Stomach (tissue), 19 donors: ENCODE measurements at regions of chr15 and their contacts with region 1.

Region 1: DNA sequence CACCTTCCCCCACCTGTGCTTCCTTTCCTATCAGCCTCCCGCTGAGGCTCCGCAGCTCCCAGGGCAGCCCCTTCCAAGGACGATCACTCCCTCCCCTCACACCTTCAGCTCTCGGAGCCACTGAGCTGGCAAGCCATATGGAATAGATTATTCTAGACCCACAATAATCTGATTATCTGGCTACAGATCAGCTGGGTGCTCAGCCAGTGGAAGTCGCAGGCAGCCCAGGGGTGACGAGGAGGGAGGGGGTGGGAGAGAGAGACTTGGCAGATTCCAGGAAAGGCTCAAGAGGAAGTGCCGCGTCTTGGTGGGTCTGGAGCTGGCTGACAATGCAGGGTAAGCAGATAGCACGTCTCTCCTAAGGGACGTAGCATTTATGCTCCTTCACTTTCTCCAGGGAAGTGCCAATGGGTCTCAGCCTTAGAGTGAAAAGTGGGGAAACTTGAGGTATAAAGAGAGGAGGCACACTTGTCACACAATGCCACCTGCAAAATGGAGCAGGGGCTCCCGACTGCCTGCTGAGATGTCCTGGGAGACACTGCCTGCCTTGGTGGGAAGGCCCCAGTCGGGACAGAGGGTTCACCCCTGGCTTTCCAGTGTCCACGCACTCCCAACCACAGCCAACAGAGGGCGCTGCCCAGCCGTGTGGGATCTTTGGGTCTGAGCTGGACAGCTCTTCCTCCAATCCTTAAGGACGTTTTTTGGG is 9.4 kb upstream of the MESP1 start:
- DNase-seq: peak; percentile 87 to 89
- H3K4me3 ChIP-seq: no peak overlapping the region
- H3K27ac ChIP-seq: peak overlapping the region in 4 of 5 donors; percentile 25 to 73 (median 62)
- H3K4me1 ChIP-seq: peaks cover 0 to 29% (median 26%) of the 10 kb centered on the region in 4 donors
- H3K27me3 ChIP-seq: peaks cover 0 to 9% (median 0%) of the 10 kb centered on the region in 3 donors
- CTCF ChIP-seq: peak in 6 of 7 experiments; percentile 35 to 95 (median 92)
- EP300 ChIP-seq: no peak
- POLR2A ChIP-seq: no peak

Region 2: GRCh38 chr15:89851673-89852341 is 91.4 kb after region 1 on chr15:
- intact Hi-C with region 1: no loop called
- DNase-seq: no peak
- H3K4me3 ChIP-seq: no peak overlapping the region
- H3K27ac ChIP-seq: peak overlapping the region in 2 of 5 donors; percentile 6 to 20
- H3K4me1 ChIP-seq: peaks cover 0 to 31% (median 0%) of the 10 kb centered on the region in 4 donors
- H3K27me3 ChIP-seq: no peaks in the 10 kb centered on the region
- CTCF ChIP-seq: no peak
- EP300 ChIP-seq: no peak
- POLR2A ChIP-seq: no peak

Region 3: GRCh38 chr15:89874926-89875564 is 114.6 kb after region 1 on chr15:
- intact Hi-C with region 1: loop called (anchors 5 kb)
- DNase-seq: peak; percentile 88 to 93
- H3K4me3 ChIP-seq: no peak overlapping the region
- H3K27ac ChIP-seq: no peak overlapping the region
- H3K4me1 ChIP-seq: peaks cover 0 to 19% (median 9%) of the 10 kb centered on the region in 4 donors
- H3K27me3 ChIP-seq: no peaks in the 10 kb centered on the region
- CTCF ChIP-seq: peak in 5 of 7 experiments; percentile 64 to 96 (median 85)
- EP300 ChIP-seq: no peak
- POLR2A ChIP-seq: no peak